SK-N-SH (cell line): ENCODE measurements at regions of chr21 and their contacts with region 1.

Region 1: DNA sequence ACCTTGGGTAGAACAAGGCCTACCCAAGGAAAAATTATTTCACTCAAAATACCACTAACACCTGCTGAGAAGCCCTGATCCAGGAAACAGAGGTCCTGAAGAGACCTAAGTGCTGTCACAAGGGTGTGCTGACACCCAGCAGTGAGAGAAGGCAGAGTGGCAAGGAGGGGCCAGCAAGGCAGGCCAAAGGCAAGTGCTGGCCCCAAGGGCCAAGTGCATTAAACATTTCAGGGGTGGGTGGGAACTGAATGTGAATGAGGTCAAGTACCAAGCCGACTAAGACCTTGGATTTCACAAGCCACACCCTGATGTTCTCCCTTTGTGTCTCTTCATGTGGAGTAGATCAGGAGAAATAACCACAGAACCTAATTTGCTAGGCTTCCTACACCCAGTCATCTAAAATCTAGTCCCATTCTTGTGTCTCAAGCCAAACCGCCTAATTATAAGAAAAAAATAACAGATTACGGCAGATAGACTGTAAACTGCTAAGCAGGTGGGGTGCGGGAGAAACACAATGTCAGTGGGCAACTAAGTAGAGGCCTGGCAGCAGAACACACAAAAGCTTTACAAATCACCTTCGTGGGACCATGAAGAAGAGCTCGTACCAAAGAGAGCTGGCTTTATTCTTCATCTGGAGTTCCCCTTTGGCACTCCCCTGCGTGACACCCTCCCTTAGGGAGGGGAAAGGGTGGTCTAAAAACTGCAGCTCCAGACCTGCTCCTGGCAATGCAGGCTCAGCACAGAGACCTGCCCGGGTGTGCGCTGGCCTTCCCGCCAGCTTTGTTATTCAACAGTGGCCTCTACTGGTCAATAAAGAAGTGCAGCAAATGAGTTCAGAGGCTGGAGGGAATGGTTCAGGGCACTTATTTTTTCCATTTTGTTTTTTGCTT is 8.7 kb downstream of the UBE2G2 start:
- DNase-seq: peak; percentile 86
- H3K4me3 ChIP-seq: no peak overlapping the region; a peak in 1 of 4 replicates
- H3K27ac ChIP-seq: no peak overlapping the region; a peak in 1 of 4 replicates
- H3K4me1 ChIP-seq: peaks cover 0 to 4% of the 10 kb centered on the region in 2 experiments; a peak in 2 of 4 replicates
- H3K27me3 ChIP-seq: no peaks in the 10 kb centered on the region
- CTCF ChIP-seq: peak; percentile 81
- EP300 ChIP-seq: no peak
- RAD21 ChIP-seq: peak; percentile 82

Region 2: GRCh38 chr21:44423312-44423821 is 369.6 kb before region 1 on chr21:
- CTCF ChIA-PET with region 1: no interaction called
- POLR2A ChIA-PET with region 1: no interaction called
- DNase-seq: no peak
- H3K4me3 ChIP-seq: no peak overlapping the region
- H3K27ac ChIP-seq: no peak overlapping the region
- H3K4me1 ChIP-seq: peaks cover 0 to 3% of the 10 kb centered on the region in 2 experiments; a peak in 1 of 4 replicates
- H3K27me3 ChIP-seq: no peaks in the 10 kb centered on the region
- CTCF ChIP-seq: no peak
- EP300 ChIP-seq: no peak
- RAD21 ChIP-seq: no peak

Region 3: DNA sequence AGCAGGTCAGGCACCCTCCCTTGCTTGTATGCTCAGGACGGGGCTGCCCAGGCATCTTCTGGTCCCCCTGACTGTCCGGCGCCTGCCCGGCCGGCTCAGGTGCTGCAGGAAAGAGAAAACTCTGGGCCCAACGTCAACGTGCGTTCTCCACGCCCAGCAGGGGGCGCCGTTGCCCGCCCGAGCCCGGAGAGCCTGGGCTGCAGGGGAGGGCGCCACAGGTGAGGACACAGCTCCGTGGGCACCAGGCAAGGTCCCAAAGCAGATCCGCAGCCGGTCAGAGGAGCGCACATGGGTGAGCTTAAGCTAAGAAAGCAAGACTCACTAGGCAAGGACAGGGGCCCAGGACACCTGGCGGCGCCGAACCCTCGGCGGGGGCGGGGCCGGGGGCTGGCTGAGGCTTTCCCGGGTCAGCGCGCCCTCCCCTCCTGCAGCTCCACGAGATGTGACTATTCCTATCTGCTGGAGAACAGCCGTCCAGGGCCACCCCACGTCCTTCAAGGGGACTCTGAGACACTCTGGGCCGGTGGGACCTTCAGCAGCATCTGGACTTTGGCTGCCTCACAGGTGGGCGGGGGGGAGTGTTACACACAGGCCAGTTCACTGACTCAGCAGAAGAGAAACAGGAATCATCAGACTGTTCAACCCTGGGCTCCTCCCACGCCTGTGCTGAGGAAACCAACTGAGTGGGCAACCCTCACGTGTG is 282.3 kb before region 1 on chr21:
- CTCF ChIA-PET with region 1: interaction called, 31 read pairs
- POLR2A ChIA-PET with region 1: no interaction called
- DNase-seq: peak; percentile 83
- H3K4me3 ChIP-seq: peak overlapping the region in 1 of 2 experiments; percentile 41; a peak in 1 of 4 replicates
- H3K27ac ChIP-seq: no peak overlapping the region
- H3K4me1 ChIP-seq: no peaks in the 10 kb centered on the region; a peak in 1 of 4 replicates
- H3K27me3 ChIP-seq: 0 out of 2 replicates have a peak, but pooled peaks cover 9% of the 10 kb centered on the region
- CTCF ChIP-seq: peak; percentile 85
- EP300 ChIP-seq: no peak
- RAD21 ChIP-seq: peak; percentile 60

Region 4: GRCh38 chr21:44626262-44626661 is 166.7 kb before region 1 on chr21:
- CTCF ChIA-PET with region 1: interaction called, 15 read pairs
- POLR2A ChIA-PET with region 1: no interaction called
- DNase-seq: no peak
- H3K4me3 ChIP-seq: no peak overlapping the region
- H3K27ac ChIP-seq: no peak overlapping the region
- H3K4me1 ChIP-seq: no peaks in the 10 kb centered on the region; a peak in 1 of 4 replicates
- H3K27me3 ChIP-seq: peaks cover 11% of the 10 kb centered on the region; the same call in 1 of the 2 replicates
- CTCF ChIP-seq: no peak
- EP300 ChIP-seq: no peak
- RAD21 ChIP-seq: no peak

Region 5: DNA sequence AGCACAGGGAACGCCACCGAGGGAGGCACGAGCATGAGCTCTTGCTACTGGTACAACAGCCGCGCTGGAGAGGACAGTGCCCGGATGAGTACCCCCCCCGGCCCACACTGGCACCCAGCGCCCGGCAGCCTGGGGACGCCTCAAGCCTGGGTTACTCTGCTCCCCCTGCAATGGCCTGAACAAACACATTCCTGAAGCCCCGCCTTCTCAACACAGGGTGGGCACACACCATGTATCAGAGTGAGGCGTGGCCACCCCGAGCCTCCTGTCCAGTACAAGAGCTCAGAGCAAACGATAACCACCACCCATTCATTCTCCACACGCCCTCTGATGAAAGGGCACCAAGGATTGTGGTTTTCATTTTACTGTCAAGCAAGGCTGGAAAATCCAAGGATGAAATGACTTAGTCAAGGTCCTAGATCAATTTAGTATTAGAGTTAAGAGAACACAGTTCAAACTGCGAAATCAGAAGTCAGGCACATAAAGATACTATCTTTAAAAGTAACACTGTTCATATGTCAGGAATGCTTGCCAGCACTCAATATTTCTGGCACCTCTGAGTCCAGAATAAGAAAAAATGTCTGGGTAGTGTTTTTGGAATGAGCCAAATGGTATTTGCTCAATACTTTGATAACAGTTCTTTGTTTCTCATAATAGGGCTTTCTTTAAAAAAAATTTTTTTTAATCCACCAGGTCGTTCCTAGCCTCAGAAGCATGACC is 13.4 kb before region 1 on chr21:
- CTCF ChIA-PET with region 1: interaction called, 23 read pairs
- POLR2A ChIA-PET with region 1: no interaction called
- DNase-seq: no peak
- H3K4me3 ChIP-seq: no peak overlapping the region
- H3K27ac ChIP-seq: 0 out of 4 replicates have a peak overlapping the region, but pooled peaks of 1 of the 2 experiments have one; percentile 11
- H3K4me1 ChIP-seq: peaks cover 0 to 19% of the 10 kb centered on the region in 2 experiments; a peak in 2 of 4 replicates
- H3K27me3 ChIP-seq: no peaks in the 10 kb centered on the region
- CTCF ChIP-seq: no peak
- EP300 ChIP-seq: no peak
- RAD21 ChIP-seq: no peak

Region 6: DNA sequence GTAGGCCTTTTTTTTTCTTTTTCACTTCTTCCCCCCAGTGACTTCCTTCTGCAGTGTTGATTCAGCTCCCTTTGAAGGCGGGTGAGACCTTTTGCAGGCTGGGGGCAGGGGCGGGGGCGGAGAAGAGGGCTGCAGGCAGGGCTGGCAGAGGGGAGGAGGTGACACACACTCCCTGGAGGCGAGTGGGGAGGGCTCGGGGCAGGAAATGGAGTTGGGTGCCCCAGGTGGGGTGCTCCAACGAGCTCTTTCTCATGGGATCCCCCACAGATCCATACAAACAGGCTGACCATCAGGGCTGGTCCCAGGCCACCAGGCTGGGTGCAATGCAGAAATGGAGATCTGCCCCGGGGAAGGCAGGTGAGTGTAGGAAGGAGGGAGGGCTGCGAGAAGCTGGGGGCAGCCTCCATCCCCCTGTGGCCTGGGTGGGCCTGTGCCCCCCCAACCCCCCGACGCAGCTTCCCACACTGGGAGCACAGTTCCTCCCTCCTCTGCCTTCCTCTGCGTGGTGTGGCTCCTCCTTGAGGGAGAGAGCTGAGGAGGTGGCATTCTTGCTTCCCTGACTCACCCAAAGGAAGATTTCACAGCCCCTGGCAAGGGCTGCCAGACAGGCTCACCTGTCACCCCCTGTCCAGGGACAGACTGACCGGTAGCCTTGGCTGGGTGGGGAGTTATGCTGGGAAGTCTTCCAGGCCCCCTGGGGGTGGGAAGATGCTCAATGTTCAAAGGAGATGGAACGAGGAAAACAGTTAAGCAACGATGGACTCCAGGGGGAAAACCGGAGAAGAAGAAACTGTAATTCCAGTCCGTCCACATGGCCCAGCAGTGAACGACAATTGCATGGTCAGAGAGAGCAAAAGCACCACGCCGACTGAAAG is 134.9 kb after region 1 on chr21:
- CTCF ChIA-PET with region 1: interaction called, 10 read pairs
- POLR2A ChIA-PET with region 1: no interaction called
- DNase-seq: no peak
- H3K4me3 ChIP-seq: peak overlapping the region in 1 of 2 experiments; percentile 35; a peak in 2 of 4 replicates
- H3K27ac ChIP-seq: peak overlapping the region in 1 of 2 experiments; percentile 35; a peak in 1 of 4 replicates
- H3K4me1 ChIP-seq: peaks cover 16 to 32% of the 10 kb centered on the region in 2 experiments; a peak in 2 of 4 replicates
- H3K27me3 ChIP-seq: peaks cover 27% of the 10 kb centered on the region
- CTCF ChIP-seq: peak; percentile 16; the same call in 1 of the 2 replicates
- EP300 ChIP-seq: 0 out of 4 replicates have a peak, but pooled peaks of 1 of the 2 experiments have one; percentile 6
- RAD21 ChIP-seq: no peak